ENCODE measurements at regions of chr16 and their contacts with region 1.

Region 1: DNA sequence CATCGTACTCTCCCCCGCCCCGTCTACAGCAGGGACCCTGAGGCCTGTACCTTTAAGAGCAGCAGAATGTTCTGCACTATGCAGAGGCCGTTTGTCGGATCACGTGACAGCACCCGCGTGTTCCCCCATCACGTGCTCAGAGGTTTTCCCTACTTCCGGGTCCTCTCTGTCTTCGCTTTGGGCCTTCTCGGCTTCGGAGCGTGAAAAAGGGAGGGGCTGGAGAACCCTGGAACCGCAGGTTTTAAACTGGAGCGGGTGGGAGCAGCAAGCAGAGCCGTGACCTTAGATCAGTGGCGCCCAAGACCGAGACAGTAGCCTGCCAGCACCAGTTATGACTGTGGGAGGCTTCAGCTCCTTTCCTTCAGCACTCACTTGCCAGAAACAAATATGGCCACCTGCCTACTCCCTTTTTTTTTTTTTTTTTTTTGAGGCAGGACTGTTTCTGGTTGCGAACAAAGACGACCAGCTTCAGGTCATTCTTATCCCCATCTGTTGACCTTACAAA is at the start of gene CLN3:
- DNase-seq: peak; percentile 92 to 98 (median 95)
- H3K4me3 ChIP-seq: peak within 1 kb of the TSS; percentile 38 to 85 (median 76)
- H3K27ac ChIP-seq: peak within 1 kb of the TSS; percentile 83 to 99 (median 96)
- H3K4me1 ChIP-seq: peaks cover 6 to 12% of the 10 kb centered on the region in 2 donors
- H3K27me3 ChIP-seq: no peaks in the 10 kb centered on the region
- CTCF ChIP-seq: no peak
- POLR2A ChIP-seq: peak in 1 of 2 donors; percentile 52
- total RNA-seq, gene CLN3: 8.4 to 78.0 (median 42.5) TPM

Region 2: DNA sequence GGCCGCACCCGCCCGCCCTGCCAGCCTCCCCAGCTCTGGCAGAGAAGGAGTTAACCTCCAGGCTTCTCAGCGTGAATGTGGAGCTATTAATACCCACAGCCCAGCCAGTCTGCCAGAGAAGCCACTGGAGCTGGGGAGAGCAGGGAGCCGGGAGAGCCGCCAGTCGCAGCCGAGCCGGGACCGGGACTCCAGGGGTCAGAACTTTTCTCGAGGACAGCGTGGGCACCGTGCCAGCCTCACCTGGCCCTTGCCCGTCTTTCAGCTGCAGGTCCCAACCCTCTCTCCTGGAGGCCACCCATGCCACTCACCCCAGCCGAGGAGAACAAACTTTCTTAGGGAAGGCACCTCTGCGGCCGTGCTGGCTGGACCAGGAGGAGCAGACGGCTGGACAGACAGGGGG is 233.5 kb before region 1 on chr16:
- intact Hi-C with region 1: no loop called
- DNase-seq: peak in 6 of 7 donors; percentile 32 to 55 (median 41)
- H3K4me3 ChIP-seq: peak overlapping the region in 1 of 4 donors; percentile 19
- H3K27ac ChIP-seq: no peak overlapping the region
- H3K4me1 ChIP-seq: peaks cover 0 to 8% of the 10 kb centered on the region in 2 donors
- H3K27me3 ChIP-seq: peaks cover 14% of the 10 kb centered on the region
- CTCF ChIP-seq: no peak
- POLR2A ChIP-seq: no peak

Region 3: GRCh38 chr16:28543072-28543471 is 51.0 kb after region 1 on chr16:
- intact Hi-C with region 1: loop called (anchors 5 to 10 kb)
- DNase-seq: peak in 3 of 7 donors; percentile 44 to 69 (median 51)
- H3K4me3 ChIP-seq: no peak overlapping the region
- H3K27ac ChIP-seq: peak overlapping the region in 1 of 5 donors; percentile 43
- H3K4me1 ChIP-seq: peaks cover 7 to 9% of the 10 kb centered on the region in 2 donors
- H3K27me3 ChIP-seq: no peaks in the 10 kb centered on the region
- CTCF ChIP-seq: no peak
- POLR2A ChIP-seq: no peak

Region 4: DNA sequence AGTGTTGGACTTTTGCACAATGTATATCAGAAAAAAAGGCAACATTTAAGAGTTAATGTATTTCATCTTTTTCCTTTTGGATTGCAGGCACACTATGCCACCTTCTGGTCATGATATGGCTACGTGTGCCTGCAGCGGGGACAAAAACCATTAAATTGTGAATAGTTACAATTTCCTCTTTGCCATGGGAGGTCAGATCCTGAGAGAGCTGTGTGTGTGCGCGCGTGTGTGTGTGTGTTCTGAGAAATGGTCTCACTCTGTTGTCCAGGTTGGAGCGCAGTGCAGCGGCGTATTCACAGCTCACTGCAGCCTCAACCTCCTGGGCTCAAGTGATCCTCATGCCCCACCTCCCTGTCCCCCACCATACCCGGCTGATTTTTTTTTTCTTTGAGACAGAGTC is 57.4 kb after region 1 on chr16:
- intact Hi-C with region 1: loop called (anchors 5 to 10 kb)
- DNase-seq: peak in 3 of 7 donors; percentile 17 to 42 (median 37)
- H3K4me3 ChIP-seq: no peak overlapping the region
- H3K27ac ChIP-seq: no peak overlapping the region
- H3K4me1 ChIP-seq: peaks cover 0 to 2% of the 10 kb centered on the region in 2 donors
- H3K27me3 ChIP-seq: no peaks in the 10 kb centered on the region
- CTCF ChIP-seq: peak; percentile 39 to 69 (median 61)
- POLR2A ChIP-seq: no peak

Region 5: DNA sequence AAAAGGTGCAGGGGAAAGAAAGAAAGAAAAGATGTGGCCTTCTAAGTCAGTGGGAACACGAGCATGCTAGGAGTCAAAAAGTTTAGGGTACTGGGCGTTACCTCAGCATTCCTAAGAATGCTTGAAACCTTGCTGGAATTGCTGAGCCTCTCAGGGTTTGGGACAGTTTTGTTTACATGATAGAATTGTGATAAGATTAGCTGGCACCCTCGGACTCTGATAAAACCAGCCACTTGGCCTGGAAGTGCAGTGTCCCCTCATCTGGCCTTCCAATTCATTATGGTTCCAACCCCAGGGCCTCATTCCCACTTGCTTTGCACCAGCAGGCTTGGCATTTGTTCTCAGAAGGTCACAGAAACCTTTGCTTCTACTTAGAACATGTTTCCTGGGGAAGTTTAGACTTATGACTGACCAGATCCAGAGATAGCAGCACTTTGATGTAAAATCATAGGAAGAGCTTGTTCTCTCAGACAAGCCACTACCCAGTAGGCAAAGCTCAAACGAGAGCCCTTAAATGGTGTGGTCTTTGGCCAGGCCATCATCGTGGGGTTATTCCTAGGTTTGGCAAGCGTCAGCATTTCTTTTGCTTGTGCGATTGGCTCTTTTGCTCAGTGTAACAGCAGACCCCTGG is 69.7 kb after region 1 on chr16:
- intact Hi-C with region 1: no loop called
- DNase-seq: peak in 5 of 7 donors; percentile 11 to 58 (median 47)
- H3K4me3 ChIP-seq: no peak overlapping the region
- H3K27ac ChIP-seq: peak overlapping the region in 3 of 5 donors; percentile 27 to 67 (median 28)
- H3K4me1 ChIP-seq: peaks cover 14 to 15% of the 10 kb centered on the region in 2 donors
- H3K27me3 ChIP-seq: no peaks in the 10 kb centered on the region
- CTCF ChIP-seq: no peak
- POLR2A ChIP-seq: no peak

Region 6: DNA sequence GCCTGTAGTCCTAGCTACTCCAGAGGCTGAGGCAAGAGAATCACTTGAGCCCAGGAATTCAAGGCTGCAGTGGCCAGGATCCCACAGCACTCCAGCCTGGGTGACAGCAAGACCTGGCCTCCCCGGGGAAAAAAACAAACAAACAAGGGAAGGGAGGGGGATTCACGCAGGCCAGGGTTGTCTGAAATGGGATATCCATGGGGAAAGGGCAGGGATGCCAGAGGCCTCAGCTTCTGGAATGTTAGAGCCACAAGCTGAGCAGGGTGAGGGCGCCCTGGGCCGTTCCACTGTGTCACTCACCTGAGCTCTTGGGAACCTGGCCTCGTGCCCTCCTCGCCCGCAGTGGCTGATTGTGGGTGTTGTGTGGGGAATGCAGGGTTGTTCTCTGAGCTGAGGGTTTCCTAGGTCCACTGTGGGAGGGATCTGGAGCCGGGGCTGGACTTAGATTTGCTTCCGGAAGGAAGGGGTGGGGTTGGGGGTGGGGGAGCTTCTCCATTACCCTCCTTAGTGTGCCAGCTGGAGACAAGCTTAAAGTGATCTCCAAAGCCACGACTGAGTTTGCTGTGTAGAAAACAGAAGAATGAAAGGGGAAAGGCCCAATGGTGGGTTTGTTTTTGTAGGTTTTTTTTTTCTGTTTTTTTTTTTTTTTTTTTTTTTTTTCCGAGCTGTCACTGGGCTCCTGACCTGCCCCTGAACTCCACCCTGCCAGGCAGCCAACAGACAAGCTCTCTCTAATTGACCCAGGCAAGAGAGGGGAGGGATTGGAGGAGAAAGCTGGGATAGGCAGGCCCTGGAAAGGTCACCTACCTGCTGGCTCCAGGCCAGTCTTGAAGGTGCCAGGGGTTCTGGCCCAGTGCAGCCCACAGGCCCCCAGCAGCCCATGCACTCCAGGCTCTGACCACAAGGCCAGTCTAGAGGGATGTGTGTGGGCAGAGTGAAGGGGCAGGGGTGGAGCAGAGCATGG is 117.9 kb after region 1 on chr16 and contains the start of gene SULT1A1:
- intact Hi-C with region 1: loop called in 1 of 2 experiments (anchors 10 kb)
- DNase-seq: peak; percentile 59 to 87 (median 82)
- H3K4me3 ChIP-seq: peak within 1 kb of the TSS in 3 of 4 donors; percentile 24 to 68 (median 40)
- H3K27ac ChIP-seq: peak within 1 kb of the TSS; percentile 5 to 76 (median 71)
- H3K4me1 ChIP-seq: peaks cover 30 to 37% of the 10 kb centered on the region in 2 donors
- H3K27me3 ChIP-seq: no peaks in the 10 kb centered on the region
- CTCF ChIP-seq: peak in 1 of 6 experiments; percentile 5
- POLR2A ChIP-seq: no peak
- total RNA-seq, gene SULT1A1: 62.4 to 367 (median 119) TPM

Measured in adrenal gland (tissue), 19 donors.